ENCODE measurements at regions of chr2 and their contacts with region 1.

Region 1: GRCh38 chr2:119641562-119642258 is 37.3 kb upstream of the TMEM177 start:
- DNase-seq: peak; percentile 63 to 76
- ATAC-seq: peak; percentile 64 to 92 (median 82)
- H3K4me3 ChIP-seq: no peak overlapping the region
- H3K27ac ChIP-seq: no peak overlapping the region
- H3K4me1 ChIP-seq: no peaks in the 10 kb centered on the region
- H3K27me3 ChIP-seq: no peaks in the 10 kb centered on the region
- CTCF ChIP-seq: peak; percentile 91

Region 2: DNA sequence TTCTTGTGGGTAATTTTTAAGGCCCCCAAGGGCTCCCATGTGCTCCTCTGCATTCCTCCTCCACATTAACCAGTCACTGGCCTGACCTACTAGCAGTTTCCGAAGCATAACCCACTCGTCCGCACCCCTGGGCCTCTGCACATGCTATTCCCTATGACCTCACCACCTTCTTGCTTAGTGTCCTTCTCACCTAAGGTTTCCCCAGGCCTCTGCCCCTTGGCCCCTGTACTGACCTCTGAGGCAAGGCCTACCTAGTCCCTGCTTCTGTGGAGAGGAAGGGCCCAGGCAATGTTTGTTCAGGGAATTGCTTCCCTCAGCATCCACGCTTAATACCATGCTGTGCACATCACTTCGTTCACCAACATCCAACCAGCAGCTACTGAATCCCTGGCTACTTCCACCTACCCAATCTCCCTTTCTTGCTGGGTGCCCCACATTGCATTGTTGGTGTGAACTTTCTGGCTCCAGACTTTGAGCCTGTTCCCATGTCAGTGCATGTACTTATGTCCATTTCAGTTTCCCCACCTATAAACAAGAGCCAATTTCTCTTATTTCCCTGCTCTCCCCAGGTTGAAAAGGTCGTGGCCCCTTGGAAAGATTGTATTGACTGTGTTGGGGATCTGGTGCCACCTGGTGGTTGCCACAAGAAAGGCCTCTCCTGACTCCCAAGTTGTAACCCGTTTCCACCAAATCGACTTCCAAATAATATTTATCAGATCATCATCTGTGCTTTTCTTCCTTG is 18.1 kb after region 1 on chr2:
- intact Hi-C with region 1: loop called in 1 of 2 experiments (anchors 2 kb)
- DNase-seq: peak in 1 of 2 donors; percentile 34
- ATAC-seq: peak in 3 of 4 donors; percentile 56 to 65 (median 60)
- H3K4me3 ChIP-seq: no peak overlapping the region
- H3K27ac ChIP-seq: no peak overlapping the region
- H3K4me1 ChIP-seq: no peaks in the 10 kb centered on the region
- H3K27me3 ChIP-seq: no peaks in the 10 kb centered on the region
- CTCF ChIP-seq: peak; percentile 82